OCI-LY7 (cell line): ENCODE measurements at regions of chr19 and their contacts with region 1.

Region 1: GRCh38 chr19:38335949-38336637 is 463 bp downstream of the CATSPERG start:
- DNase-seq: peak; percentile 96
- H3K4me3 ChIP-seq: peak overlapping the region; percentile 79
- H3K27ac ChIP-seq: peak overlapping the region; percentile 79
- H3K4me1 ChIP-seq: peaks cover 5% of the 10 kb centered on the region
- CTCF ChIP-seq: no peak

Region 2: GRCh38 chr19:38229585-38230073 is 106.5 kb before region 1 on chr19:
- CTCF ChIA-PET with region 1: no interaction called
- POLR2A ChIA-PET with region 1: interaction called, 6 read pairs
- intact Hi-C with region 1: loop called (anchors 1 kb)
- DNase-seq: peak; percentile 96
- H3K4me3 ChIP-seq: peak overlapping the region; percentile 82
- H3K27ac ChIP-seq: no peak overlapping the region
- H3K4me1 ChIP-seq: peaks cover 13% of the 10 kb centered on the region
- CTCF ChIP-seq: no peak

Region 3: GRCh38 chr19:38245826-38246498 is 90.1 kb before region 1 on chr19:
- CTCF ChIA-PET with region 1: interaction called, 15 read pairs
- POLR2A ChIA-PET with region 1: no interaction called
- intact Hi-C with region 1: loop called (anchors 1 kb)
- DNase-seq: no peak
- H3K4me3 ChIP-seq: no peak overlapping the region
- H3K27ac ChIP-seq: no peak overlapping the region
- H3K4me1 ChIP-seq: peaks cover 8% of the 10 kb centered on the region
- CTCF ChIP-seq: no peak

Region 4: GRCh38 chr19:38360839-38361631 is 24.9 kb after region 1 on chr19:
- CTCF ChIA-PET with region 1: no interaction called
- POLR2A ChIA-PET with region 1: no interaction called
- intact Hi-C with region 1: no loop called
- DNase-seq: no peak
- H3K4me3 ChIP-seq: peak overlapping the region; percentile 71
- H3K27ac ChIP-seq: no peak overlapping the region
- H3K4me1 ChIP-seq: peaks cover 11% of the 10 kb centered on the region
- CTCF ChIP-seq: no peak

Region 5: DNA sequence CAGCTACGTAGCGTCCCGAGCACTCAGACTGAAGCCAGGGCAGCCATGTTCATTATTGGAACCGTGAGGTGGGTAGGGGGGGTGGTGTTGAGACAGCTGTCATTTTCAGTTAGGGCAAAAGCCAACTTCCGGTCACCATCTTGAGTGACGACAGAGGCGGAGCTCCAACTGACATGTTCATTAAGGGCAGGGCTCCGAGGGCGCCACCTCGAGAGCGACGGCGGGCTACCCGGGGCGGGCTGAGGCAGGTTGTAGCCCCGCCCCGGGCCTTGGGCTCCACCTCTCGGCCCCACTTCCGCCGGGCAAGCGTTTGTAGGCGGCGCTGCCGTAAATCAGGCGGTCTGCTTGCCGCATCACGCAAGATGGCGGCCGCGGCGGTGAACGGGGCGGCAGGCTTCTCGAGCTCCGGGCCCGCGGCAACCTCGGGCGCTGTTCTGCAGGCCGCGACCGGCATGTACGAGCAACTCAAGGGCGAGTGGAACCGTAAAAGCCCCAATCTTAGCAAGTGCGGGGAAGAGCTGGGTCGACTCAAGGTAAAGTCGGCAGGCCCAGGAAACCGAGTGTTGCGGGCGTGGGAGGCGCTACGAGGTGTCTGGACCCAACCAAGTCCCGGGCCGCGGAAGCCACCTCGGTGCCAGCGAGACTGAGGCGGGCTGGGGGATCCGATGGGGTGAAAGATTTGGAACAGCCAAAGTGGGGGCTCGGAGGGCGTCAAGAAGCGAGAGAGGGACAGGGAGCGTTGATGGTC is 38.5 kb after region 1 on chr19 and contains the start of gene PSMD8:
- CTCF ChIA-PET with region 1: interaction called, 5 read pairs
- POLR2A ChIA-PET with region 1: interaction called, 12 read pairs
- intact Hi-C with region 1: loop called (anchors 1 kb)
- DNase-seq: peak; percentile 100
- H3K4me3 ChIP-seq: peak within 1 kb of the TSS; percentile 84
- H3K27ac ChIP-seq: peak within 1 kb of the TSS; percentile 54
- H3K4me1 ChIP-seq: peaks cover 21% of the 10 kb centered on the region
- CTCF ChIP-seq: peak; percentile 56
- total RNA-seq, gene PSMD8: 224 and 238 TPM in 2 replicates

Region 6: GRCh38 chr19:38618590-38619360 is 282.7 kb after region 1 on chr19 and contains the start of gene EIF3K:
- CTCF ChIA-PET with region 1: no interaction called
- POLR2A ChIA-PET with region 1: no interaction called
- intact Hi-C with region 1: loop called (anchors 1 kb)
- DNase-seq: peak; percentile 99
- H3K4me3 ChIP-seq: peak within 1 kb of the TSS; percentile 92
- H3K27ac ChIP-seq: peak within 1 kb of the TSS; percentile 87
- H3K4me1 ChIP-seq: peaks cover 37% of the 10 kb centered on the region
- CTCF ChIP-seq: no peak
- total RNA-seq, gene EIF3K: 321 and 325 TPM in 2 replicates